ENCODE measurements at regions of chr15 and their contacts with region 1.

Region 1: DNA sequence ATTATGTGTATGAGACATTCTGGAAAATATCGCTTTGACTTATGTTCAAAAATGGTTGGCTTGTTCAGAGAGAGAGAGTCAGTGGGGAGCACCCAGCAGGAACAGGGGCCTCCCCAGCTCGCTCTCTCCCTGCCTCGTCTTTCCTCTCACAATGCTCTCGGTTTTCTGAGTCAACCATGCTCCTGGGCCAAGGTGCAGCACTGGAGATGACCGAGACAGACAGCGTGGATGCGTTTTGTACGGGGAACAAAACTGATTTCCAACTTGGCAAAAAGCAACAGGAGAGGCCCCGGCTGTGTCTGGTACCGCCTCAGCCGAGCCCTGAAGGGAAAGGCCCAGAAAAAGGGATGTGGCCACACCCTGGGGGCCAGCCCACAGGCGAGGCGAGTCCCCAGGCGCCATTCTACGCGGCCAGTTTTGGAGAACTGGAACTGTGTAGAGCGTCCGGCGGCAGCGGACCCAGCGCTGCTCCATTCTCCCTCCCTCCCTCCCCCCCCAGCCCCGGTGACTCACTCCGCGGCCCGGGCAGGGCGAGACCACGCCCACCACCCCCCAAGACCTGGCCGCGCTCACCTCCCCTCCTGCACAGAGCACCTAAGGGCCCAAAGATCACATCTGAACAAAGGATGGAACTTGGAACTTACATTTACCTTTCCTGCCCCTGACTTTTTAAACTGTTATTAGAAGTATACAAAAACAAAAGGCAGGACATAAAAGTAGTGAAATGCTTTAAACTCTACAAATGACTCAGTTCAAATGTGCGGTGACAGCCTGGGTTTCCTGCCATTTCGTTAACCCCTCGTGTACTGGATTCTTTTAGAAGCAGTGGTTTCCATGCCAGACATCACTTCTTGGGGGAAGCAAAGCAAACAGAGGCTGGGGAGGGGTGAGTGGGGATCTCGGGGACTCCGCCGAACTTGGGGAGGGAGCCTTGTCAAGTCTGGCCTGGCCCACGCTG is 12.7 kb downstream of the ATP10A start:
- DNase-seq: peak; percentile 64
- H3K4me3 ChIP-seq: peak overlapping the region; percentile 16 to 49 (median 19)
- H3K27ac ChIP-seq: peak overlapping the region; percentile 83 to 93 (median 86)
- H3K4me1 ChIP-seq: peaks cover 7 to 34% (median 18%) of the 10 kb centered on the region in 4 donors
- H3K27me3 ChIP-seq: no peaks in the 10 kb centered on the region
- CTCF ChIP-seq: no peak
- EP300 ChIP-seq: no peak
- POLR2A ChIP-seq: peak; percentile 32

Region 2: GRCh38 chr15:25793354-25794050 is 56.9 kb before region 1 on chr15:
- in situ Hi-C with region 1: no loop called
- intact Hi-C with region 1: no loop called
- DNase-seq: no peak
- H3K4me3 ChIP-seq: no peak overlapping the region
- H3K27ac ChIP-seq: no peak overlapping the region
- H3K4me1 ChIP-seq: peaks cover 3 to 38% (median 5%) of the 10 kb centered on the region in 4 donors
- H3K27me3 ChIP-seq: no peaks in the 10 kb centered on the region
- CTCF ChIP-seq: no peak
- EP300 ChIP-seq: no peak
- POLR2A ChIP-seq: no peak

Region 3: DNA sequence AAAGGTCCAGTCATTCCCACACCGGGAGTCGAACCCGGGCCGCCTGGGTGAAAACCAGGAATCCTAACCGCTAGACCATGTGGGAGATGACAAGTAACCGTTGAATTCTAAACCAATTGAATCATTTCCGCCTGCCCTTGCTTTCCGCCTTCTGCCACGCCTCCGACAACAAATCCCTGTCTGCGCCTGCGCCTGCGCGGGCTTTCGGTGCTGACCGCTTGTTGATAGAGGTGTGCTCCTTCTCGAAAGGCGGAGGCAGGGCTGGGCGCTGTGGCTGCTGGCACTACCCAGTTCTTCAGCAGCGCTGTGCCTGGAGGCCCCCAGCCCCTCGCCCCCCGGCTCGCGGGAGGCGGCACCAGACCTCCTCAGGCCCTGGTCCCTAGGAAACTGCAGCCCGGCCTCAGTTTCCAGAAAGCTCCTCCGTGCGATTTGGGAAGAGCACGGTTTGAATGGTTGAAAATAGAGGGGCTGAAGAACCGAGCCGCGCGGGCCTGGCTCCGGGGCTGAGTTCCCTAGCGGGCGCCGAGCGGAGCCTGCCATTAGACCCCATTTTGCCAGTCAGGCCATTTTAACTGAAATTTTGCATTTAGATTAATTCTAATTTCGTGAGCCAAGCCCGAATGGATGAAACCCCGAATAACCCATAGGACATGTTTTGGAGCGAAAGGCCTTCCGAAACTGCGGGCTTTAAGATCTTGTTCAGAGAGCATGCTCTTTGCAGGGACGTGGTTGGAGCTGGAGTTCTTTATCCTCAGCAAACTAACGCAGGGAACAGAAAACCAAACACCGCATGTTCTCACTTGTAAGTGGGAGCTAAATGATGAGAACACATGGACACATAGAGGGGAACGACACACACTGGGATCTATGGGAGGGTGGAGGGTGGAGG is 232.0 kb after region 1 on chr15:
- in situ Hi-C with region 1: loop called in 1 of 4 experiments (anchors 25 kb)
- intact Hi-C with region 1: no loop called
- DNase-seq: peak; percentile 94
- H3K4me3 ChIP-seq: peak overlapping the region; percentile 53 to 75 (median 67)
- H3K27ac ChIP-seq: peak overlapping the region; percentile 87 to 95 (median 92)
- H3K4me1 ChIP-seq: peaks cover 0 to 10% (median 0%) of the 10 kb centered on the region in 4 donors
- H3K27me3 ChIP-seq: no peaks in the 10 kb centered on the region
- CTCF ChIP-seq: peak in 2 of 5 experiments; percentile 17 to 22
- EP300 ChIP-seq: no peak
- POLR2A ChIP-seq: peak; percentile 65

Region 4: DNA sequence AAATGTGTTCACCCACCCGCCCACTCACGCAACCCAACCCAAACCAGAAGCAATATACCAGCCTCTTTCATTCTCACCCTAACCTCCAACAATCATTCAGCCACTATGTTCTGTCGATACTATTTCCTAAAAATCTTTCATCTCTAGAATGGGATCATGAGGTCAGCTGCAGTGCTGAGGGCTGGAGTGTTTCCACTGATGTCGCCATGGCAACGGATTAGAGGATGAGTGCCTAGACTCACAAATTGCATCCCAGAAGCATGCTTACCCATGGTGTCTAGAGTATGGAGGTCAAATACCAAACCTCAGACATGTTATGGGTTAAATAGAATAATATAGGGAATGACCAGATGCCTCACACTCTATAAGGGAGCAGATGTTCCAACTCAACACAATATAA is 783.9 kb after region 1 on chr15:
- in situ Hi-C with region 1: no loop called
- intact Hi-C with region 1: no loop called
- DNase-seq: no peak
- H3K4me3 ChIP-seq: no peak overlapping the region
- H3K27ac ChIP-seq: no peak overlapping the region
- H3K4me1 ChIP-seq: no peaks in the 10 kb centered on the region
- H3K27me3 ChIP-seq: no peaks in the 10 kb centered on the region
- CTCF ChIP-seq: no peak
- EP300 ChIP-seq: no peak
- POLR2A ChIP-seq: no peak

Measured in transverse colon (tissue), 4 donors.